Caco-2 (cell line): ENCODE measurements at regions of chr6 and their contacts with region 1.

Region 1: GRCh38 chr6:128586095-128586494 is 65.7 kb upstream of the PTPRK start:
- DNase-seq: no peak
- H3K4me3 ChIP-seq: no peak overlapping the region
- H3K4me3 Mint-ChIP-seq: no peak overlapping the region
- H3K27ac Mint-ChIP-seq: no peak overlapping the region
- H3K4me1 ChIP-seq: no peaks in the 10 kb centered on the region
- H3K4me1 Mint-ChIP-seq: no peaks in the 10 kb centered on the region
- H3K27me3 ChIP-seq: no peaks in the 10 kb centered on the region
- H3K27me3 Mint-ChIP-seq: peaks cover 17% of the 10 kb centered on the region
- CTCF ChIP-seq: no peak

Region 2: GRCh38 chr6:127938701-127939100 is 647.4 kb before region 1 on chr6:
- CTCF ChIA-PET with region 1: no interaction called
- POLR2A ChIA-PET with region 1: interaction called, 11 read pairs
- intact Hi-C with region 1: no loop called
- DNase-seq: no peak
- H3K4me3 ChIP-seq: no peak overlapping the region
- H3K4me3 Mint-ChIP-seq: no peak overlapping the region
- H3K27ac Mint-ChIP-seq: no peak overlapping the region
- H3K4me1 ChIP-seq: no peaks in the 10 kb centered on the region
- H3K4me1 Mint-ChIP-seq: peaks cover 12% of the 10 kb centered on the region
- H3K27me3 ChIP-seq: no peaks in the 10 kb centered on the region
- H3K27me3 Mint-ChIP-seq: no peaks in the 10 kb centered on the region
- CTCF ChIP-seq: no peak